Naive thymus-derived CD4-positive, alpha-beta T cell (primary cell): ENCODE measurements at regions of chr11 and their contacts with region 1.

Region 1: GRCh38 chr11:93662177-93662575 is 694 bp downstream of the CEP295 start:
- DNase-seq: no peak
- ATAC-seq: no peak
- H3K4me3 ChIP-seq: peak overlapping the region; percentile 98
- H3K4me3 Mint-ChIP-seq: peak overlapping the region; percentile 76 to 96 (median 88)
- H3K27ac ChIP-seq: peak overlapping the region; percentile 88
- H3K27ac Mint-ChIP-seq: peak overlapping the region; percentile 60 to 95 (median 90)
- H3K4me1 ChIP-seq: peaks cover 8 to 11% of the 10 kb centered on the region in 2 donors
- H3K4me1 Mint-ChIP-seq: peaks cover 0 to 52% (median 37%) of the 10 kb centered on the region in 7 donors
- H3K27me3 ChIP-seq: no peaks in the 10 kb centered on the region
- H3K27me3 Mint-ChIP-seq: peaks cover 0 to 2% (median 0%) of the 10 kb centered on the region in 5 donors

Region 2: GRCh38 chr11:93197380-93198214 is 464.6 kb before region 1 on chr11 and contains the start of gene SLC36A4:
- CTCF ChIA-PET with region 1: no interaction called
- POLR2A ChIA-PET with region 1: interaction called, 7 read pairs
- intact Hi-C with region 1: loop called in 1 of 2 experiments (anchors 1 kb)
- DNase-seq: peak; percentile 78 to 90 (median 88)
- ATAC-seq: peak; percentile 94
- H3K4me3 ChIP-seq: peak within 1 kb of the TSS; percentile 54
- H3K4me3 Mint-ChIP-seq: peak within 1 kb of the TSS; percentile 88 to 98 (median 95)
- H3K27ac ChIP-seq: peak within 1 kb of the TSS; percentile 96
- H3K27ac Mint-ChIP-seq: peak within 1 kb of the TSS; percentile 87 to 99 (median 97)
- H3K4me1 ChIP-seq: peaks cover 0 to 4% of the 10 kb centered on the region in 2 donors
- H3K4me1 Mint-ChIP-seq: peaks cover 15 to 40% (median 30%) of the 10 kb centered on the region in 7 donors
- H3K27me3 ChIP-seq: no peaks in the 10 kb centered on the region
- H3K27me3 Mint-ChIP-seq: peaks cover 0 to 24% (median 5%) of the 10 kb centered on the region in 5 donors
- total RNA-seq, gene SLC36A4: 12.0 to 22.0 (median 20.0) TPM

Region 3: GRCh38 chr11:93614173-93614722 is 47.9 kb before region 1 on chr11:
- CTCF ChIA-PET with region 1: no interaction called
- POLR2A ChIA-PET with region 1: no interaction called
- intact Hi-C with region 1: loop called in 1 of 2 experiments (anchors 5 kb)
- DNase-seq: peak in 7 of 9 donors; percentile 3 to 56 (median 30)
- ATAC-seq: peak; percentile 55
- H3K4me3 ChIP-seq: no peak overlapping the region
- H3K4me3 Mint-ChIP-seq: no peak overlapping the region
- H3K27ac ChIP-seq: no peak overlapping the region
- H3K27ac Mint-ChIP-seq: peak overlapping the region in 1 of 9 donors; percentile 48
- H3K4me1 ChIP-seq: no peaks in the 10 kb centered on the region
- H3K4me1 Mint-ChIP-seq: peaks cover 0 to 2% (median 0%) of the 10 kb centered on the region in 7 donors
- H3K27me3 ChIP-seq: no peaks in the 10 kb centered on the region
- H3K27me3 Mint-ChIP-seq: peaks cover 0 to 8% (median 6%) of the 10 kb centered on the region in 5 donors

Region 4: DNA sequence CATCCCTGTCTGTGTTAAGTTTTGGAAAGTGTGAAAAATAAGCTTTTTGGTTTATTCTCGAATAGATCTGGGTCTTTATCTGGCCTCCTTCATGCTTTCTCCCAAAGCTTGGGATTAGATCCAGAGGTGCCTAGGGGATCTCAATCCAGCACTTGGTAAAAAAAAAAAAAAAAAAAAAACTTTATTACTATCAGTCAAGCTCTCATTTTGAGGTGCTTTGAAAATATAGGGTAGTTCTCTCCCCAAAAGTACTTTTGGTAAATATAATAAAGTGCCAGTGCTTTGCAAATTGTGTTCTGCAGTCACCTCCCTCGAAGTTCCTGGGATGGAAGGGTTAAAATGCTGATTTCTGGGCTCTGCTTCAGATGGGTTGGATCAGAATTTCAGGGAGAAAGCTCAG is 16.2 kb before region 1 on chr11:
- CTCF ChIA-PET with region 1: interaction called, 3 read pairs
- POLR2A ChIA-PET with region 1: no interaction called
- intact Hi-C with region 1: loop called in 1 of 2 experiments (anchors 2 kb)
- DNase-seq: no peak
- ATAC-seq: no peak
- H3K4me3 ChIP-seq: no peak overlapping the region
- H3K4me3 Mint-ChIP-seq: peak overlapping the region in 7 of 10 donors; percentile 9 to 88 (median 35)
- H3K27ac ChIP-seq: no peak overlapping the region
- H3K27ac Mint-ChIP-seq: peak overlapping the region in 6 of 9 donors; percentile 46 to 91 (median 86)
- H3K4me1 ChIP-seq: peaks cover 0 to 3% of the 10 kb centered on the region in 2 donors
- H3K4me1 Mint-ChIP-seq: peaks cover 3 to 22% (median 15%) of the 10 kb centered on the region in 7 donors
- H3K27me3 ChIP-seq: no peaks in the 10 kb centered on the region
- H3K27me3 Mint-ChIP-seq: peaks cover 0 to 18% (median 4%) of the 10 kb centered on the region in 5 donors